ENCODE measurements at regions of chr6 and their contacts with region 1.

Region 1: GRCh38 chr6:31665501-31666336 is at the start of gene CSNK2B:
- DNase-seq: peak; percentile 99 to 100 (median 99)
- ATAC-seq: peak; percentile 93 to 94
- H3K4me3 ChIP-seq: peak within 1 kb of the TSS; percentile 90
- H3K27ac ChIP-seq: peak within 1 kb of the TSS; percentile 98
- H3K4me1 ChIP-seq: peaks cover 3% of the 10 kb centered on the region
- H3K27me3 ChIP-seq: no peaks in the 10 kb centered on the region
- total RNA-seq, gene CSNK2B: 110 to 123 (median 116) TPM

Region 2: GRCh38 chr6:31546962-31547726 is 118.6 kb before region 1 on chr6 and contains the start of gene NFKBIL1:
- intact Hi-C with region 1: loop called in 1 of 4 experiments (anchors 5 kb)
- DNase-seq: peak; percentile 96 to 98 (median 97)
- ATAC-seq: peak; percentile 97
- H3K4me3 ChIP-seq: peak within 1 kb of the TSS; percentile 56
- H3K27ac ChIP-seq: peak within 1 kb of the TSS; percentile 82
- H3K4me1 ChIP-seq: peaks cover 4% of the 10 kb centered on the region
- H3K27me3 ChIP-seq: no peaks in the 10 kb centered on the region
- total RNA-seq, gene NFKBIL1: 12.2 to 19.3 (median 14.6) TPM

Region 3: GRCh38 chr6:31729515-31729978 is 63.8 kb after region 1 on chr6:
- intact Hi-C with region 1: loop called in 1 of 4 experiments (anchors 5 kb)
- DNase-seq: peak; percentile 93 to 97 (median 97)
- ATAC-seq: peak; percentile 88 to 91
- H3K4me3 ChIP-seq: peak overlapping the region; percentile 81
- H3K27ac ChIP-seq: peak overlapping the region; percentile 95
- H3K4me1 ChIP-seq: peaks cover 4% of the 10 kb centered on the region
- H3K27me3 ChIP-seq: no peaks in the 10 kb centered on the region

Region 4: DNA sequence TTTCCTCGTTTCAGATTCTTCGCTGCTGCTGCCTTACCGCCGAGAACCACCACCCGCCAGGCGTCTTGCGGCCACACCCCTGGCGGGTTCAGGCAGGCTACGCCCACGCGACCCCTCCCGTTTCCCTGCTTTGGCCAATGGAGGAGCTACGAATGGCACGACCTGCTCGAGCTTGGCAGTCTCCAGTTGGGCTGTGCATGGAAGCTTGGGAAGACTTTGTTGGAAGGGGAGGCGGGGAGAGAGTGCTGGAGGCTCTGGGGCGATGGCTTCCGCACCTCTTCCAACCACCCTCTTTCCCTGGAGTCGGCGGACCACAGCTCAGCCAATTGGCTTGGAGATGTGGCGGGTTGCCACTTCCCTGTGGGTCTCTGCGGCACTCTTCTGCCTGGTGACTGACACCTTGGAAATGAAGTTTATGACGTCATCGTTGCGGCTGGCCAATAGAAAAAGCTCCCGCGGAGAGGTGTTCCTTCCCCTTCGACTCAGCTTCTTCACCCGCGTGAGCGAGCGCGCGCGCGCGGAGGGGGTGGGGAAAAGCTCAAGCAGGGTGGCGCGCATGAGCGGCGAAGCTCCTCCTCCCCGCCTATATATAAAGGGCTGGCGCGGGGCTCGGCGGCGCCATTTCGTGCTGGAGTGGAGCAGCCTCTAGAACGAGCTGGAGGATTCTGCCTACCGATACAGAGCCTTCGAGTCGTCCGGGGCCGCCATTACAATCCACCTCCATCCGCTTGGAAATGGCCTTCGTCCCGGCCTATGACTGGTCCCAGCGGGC is 1306.0 kb after region 1 on chr6:
- intact Hi-C with region 1: loop called in 1 of 4 experiments (anchors 10 kb)
- DNase-seq: peak; percentile 99 to 100 (median 99)
- ATAC-seq: peak; percentile 69
- H3K4me3 ChIP-seq: peak overlapping the region; percentile 90
- H3K27ac ChIP-seq: peak overlapping the region; percentile 98
- H3K4me1 ChIP-seq: no peaks in the 10 kb centered on the region
- H3K27me3 ChIP-seq: no peaks in the 10 kb centered on the region

Measured in right cardiac atrium (tissue), 5 donors.